ENCODE measurements at regions of chr2 and their contacts with region 1.

Region 1: GRCh38 chr2:4992226-4992625 is 700.0 kb upstream of the SOX11 start:
- DNase-seq: peak; percentile 35
- ATAC-seq: no peak
- H3K4me3 ChIP-seq: no peak overlapping the region
- H3K27ac ChIP-seq: no peak overlapping the region
- H3K4me1 ChIP-seq: no peaks in the 10 kb centered on the region
- H3K27me3 ChIP-seq: 0 out of 2 replicates have a peak, but pooled peaks cover 3% of the 10 kb centered on the region
- CTCF ChIP-seq: peak; percentile 46

Region 2: DNA sequence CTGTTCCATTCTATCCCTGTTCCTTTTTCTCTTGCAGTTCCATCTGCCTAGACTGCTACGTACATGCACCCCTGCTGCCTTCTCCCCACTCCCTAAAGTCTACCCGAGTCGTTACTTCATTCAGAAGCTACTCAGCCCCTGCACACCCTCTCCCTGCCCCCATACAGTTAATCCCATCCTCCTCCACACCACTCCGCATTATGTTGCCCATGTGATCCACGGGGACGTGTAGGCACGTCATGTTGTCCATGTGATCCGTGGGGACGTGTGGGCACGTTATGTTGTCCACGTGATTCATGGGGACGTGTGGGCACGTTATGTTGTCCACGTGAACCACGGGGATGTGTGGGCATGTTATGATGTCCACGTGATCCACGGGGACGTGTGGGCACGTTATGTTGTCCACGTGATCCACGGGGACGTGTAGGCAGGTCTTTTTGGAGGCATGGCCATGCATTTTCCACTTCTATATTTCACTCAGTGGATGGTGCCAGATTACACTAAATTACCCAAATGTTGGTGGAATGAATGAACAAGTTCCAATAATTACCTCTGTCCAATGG is 989.3 kb before region 1 on chr2:
- CTCF ChIA-PET with region 1: no interaction called
- POLR2A ChIA-PET with region 1: no interaction called
- intact Hi-C with region 1: no loop called
- DNase-seq: no peak
- ATAC-seq: no peak
- H3K4me3 ChIP-seq: no peak overlapping the region
- H3K27ac ChIP-seq: no peak overlapping the region
- H3K4me1 ChIP-seq: no peaks in the 10 kb centered on the region
- H3K27me3 ChIP-seq: no peaks in the 10 kb centered on the region
- CTCF ChIP-seq: no peak

Region 3: GRCh38 chr2:5145801-5146200 is 153.6 kb after region 1 on chr2:
- CTCF ChIA-PET with region 1: no interaction called
- POLR2A ChIA-PET with region 1: no interaction called
- intact Hi-C with region 1: no loop called
- DNase-seq: no peak
- ATAC-seq: no peak
- H3K4me3 ChIP-seq: no peak overlapping the region
- H3K27ac ChIP-seq: no peak overlapping the region
- H3K4me1 ChIP-seq: 0 out of 2 replicates have a peak, but pooled peaks cover under 1% of the 10 kb centered on the region
- H3K27me3 ChIP-seq: no peaks in the 10 kb centered on the region
- CTCF ChIP-seq: no peak

Region 4: GRCh38 chr2:5365871-5366461 is 373.7 kb after region 1 on chr2:
- CTCF ChIA-PET with region 1: no interaction called
- POLR2A ChIA-PET with region 1: no interaction called
- intact Hi-C with region 1: loop called (anchors 5 kb)
- DNase-seq: peak; percentile 78
- ATAC-seq: peak; percentile 95
- H3K4me3 ChIP-seq: 0 out of 2 replicates have a peak overlapping the region, but pooled peaks have one; percentile 30
- H3K27ac ChIP-seq: no peak overlapping the region
- H3K4me1 ChIP-seq: no peaks in the 10 kb centered on the region
- H3K27me3 ChIP-seq: no peaks in the 10 kb centered on the region
- CTCF ChIP-seq: peak; percentile 94

Region 5: DNA sequence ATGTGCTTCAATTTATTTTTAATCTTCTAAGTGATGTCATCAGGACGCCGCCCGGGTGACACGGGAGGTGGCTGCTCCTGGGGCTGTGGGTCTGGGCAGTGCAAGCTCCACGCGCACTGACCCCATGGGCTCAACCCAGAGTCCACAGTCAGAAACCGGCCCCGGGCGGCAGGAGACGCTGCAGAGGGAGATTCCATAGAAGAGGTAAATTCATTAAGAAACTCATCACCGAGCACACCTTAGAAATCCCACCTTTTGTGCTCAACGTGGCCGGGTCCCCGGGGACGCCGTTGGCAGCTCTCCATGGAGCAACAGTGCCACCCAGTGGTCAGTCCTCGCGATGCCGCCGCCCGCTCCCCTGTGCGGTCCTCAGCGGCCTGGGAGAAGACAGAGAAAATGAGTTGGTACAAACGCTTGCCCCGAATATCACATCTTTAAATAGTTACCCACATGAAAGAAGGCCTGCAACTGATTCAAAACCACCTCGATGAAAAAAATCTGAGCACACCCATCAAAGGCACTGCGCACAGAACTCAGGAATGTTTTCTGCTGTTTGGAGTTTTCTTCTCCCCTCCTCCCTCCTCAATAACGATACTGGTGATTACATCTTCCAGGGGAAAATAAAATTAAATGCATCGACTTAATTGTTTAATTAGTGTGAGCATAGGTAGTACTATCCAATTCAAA is 1780.9 kb after region 1 on chr2:
- CTCF ChIA-PET with region 1: no interaction called
- POLR2A ChIA-PET with region 1: no interaction called
- intact Hi-C with region 1: loop called (anchors 5 kb)
- DNase-seq: peak; percentile 64
- ATAC-seq: peak; percentile 95
- H3K4me3 ChIP-seq: peak overlapping the region; percentile 10; the same call in 1 of the 2 replicates
- H3K27ac ChIP-seq: no peak overlapping the region
- H3K4me1 ChIP-seq: no peaks in the 10 kb centered on the region
- H3K27me3 ChIP-seq: peaks cover 24% of the 10 kb centered on the region
- CTCF ChIP-seq: peak; percentile 96